Right ventricle myocardium inferior (tissue), 1 donor: ENCODE measurements at regions of chr15 and their contacts with region 1.

Region 1: DNA sequence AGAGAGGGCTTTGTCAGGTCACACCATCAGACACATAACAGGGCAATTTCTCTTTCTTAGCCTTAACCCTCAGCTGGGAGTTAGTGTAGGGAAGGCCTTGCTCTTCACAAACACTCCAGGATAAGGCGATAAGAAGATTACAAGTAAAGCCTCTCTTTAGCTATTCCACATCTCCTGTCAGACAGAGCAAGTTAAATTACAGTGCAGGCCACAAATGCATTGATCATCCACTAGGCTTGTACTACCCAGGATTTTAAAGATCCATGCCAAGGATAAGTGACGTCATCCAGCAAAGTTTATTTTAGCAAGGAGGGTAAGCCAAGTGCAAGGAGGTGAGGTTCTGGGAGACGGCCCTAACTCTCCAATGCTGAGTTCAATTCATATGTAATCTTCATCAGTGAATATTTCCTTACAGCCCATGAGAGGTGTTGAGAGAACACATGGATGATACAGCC is 890.6 kb upstream of the NR2F2 start:
- DNase-seq: no peak
- ATAC-seq: no peak

Region 2: DNA sequence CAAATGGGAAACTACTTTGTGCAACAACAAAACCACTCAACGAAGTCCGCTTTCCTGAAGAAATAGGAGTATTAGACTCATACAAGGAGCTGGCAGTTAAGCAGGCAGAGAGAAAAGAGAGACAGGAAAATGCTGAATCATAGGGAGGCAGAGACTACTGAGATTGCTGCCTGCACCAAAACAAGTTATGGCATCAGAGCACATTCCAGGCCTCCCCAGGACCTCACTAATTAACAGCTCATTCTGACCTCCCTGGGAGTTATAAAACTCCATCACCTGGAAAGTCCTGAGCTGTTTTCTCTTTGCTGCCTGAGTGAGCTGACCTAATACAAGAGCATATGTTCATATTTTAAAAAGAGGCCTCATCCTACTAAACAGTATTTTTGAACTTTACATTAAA is 467.6 kb before region 1 on chr15:
- intact Hi-C with region 1: no loop called
- DNase-seq: no peak
- ATAC-seq: no peak

Region 3: DNA sequence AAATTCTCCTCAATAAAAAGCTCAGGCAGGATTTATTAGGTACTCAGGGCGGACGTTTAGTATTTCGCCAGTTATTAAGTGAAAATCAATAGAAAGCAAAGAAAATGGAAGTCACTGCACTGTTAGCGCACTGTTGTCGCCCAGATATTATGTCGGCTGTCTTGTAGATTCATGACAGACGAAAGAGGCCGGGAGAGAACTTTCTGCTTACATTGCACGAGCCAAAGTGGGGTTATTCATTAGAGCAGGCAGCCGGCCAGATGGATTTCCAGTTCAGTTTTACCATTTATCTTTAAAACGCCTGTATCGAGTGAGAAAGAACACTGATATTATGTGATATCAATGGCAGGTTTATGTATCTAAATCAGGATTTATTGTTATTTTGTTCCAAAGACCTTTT is 24.6 kb after region 1 on chr15:
- intact Hi-C with region 1: loop called (anchors 1 kb)
- DNase-seq: no peak
- ATAC-seq: no peak